A549 (cell line): ENCODE measurements at regions of chr1 and their contacts with region 1.

Region 1: GRCh38 chr1:32321712-32322291 is 14.2 kb downstream of the MARCKSL1 start:
- DNase-seq: peak; percentile 42 to 88
- ATAC-seq: peak; percentile 97 to 98
- H3K4me3 ChIP-seq: 0 out of 3 replicates have a peak overlapping the region, but pooled peaks have one; percentile 9
- H3K27ac ChIP-seq: peak overlapping the region; percentile 87 to 90
- H3K4me1 ChIP-seq: peaks cover 31% of the 10 kb centered on the region
- CTCF ChIP-seq: no peak
- EP300 ChIP-seq: no peak; a peak in 1 of 5 replicates
- POLR2A ChIP-seq: no peak
- RAD21 ChIP-seq: no peak

Region 2: GRCh38 chr1:32142446-32143301 is 179.1 kb before region 1 on chr1:
- CTCF ChIA-PET with region 1: no interaction called
- POLR2A ChIA-PET with region 1: no interaction called
- DNase-seq: peak; percentile 75 to 78
- ATAC-seq: peak; percentile 91 to 96
- H3K4me3 ChIP-seq: no peak overlapping the region
- H3K27ac ChIP-seq: peak overlapping the region in 1 of 2 experiments; percentile 45; a peak in 1 of 6 replicates
- H3K4me1 ChIP-seq: peaks cover 34% of the 10 kb centered on the region
- CTCF ChIP-seq: no peak
- EP300 ChIP-seq: no peak
- POLR2A ChIP-seq: no peak
- RAD21 ChIP-seq: no peak

Region 3: GRCh38 chr1:32215629-32216480 is 105.9 kb before region 1 on chr1:
- CTCF ChIA-PET with region 1: interaction called, 30 read pairs
- POLR2A ChIA-PET with region 1: interaction called, 5 read pairs
- DNase-seq: peak; percentile 61 to 62
- ATAC-seq: peak; percentile 94 to 96
- H3K4me3 ChIP-seq: no peak overlapping the region
- H3K27ac ChIP-seq: no peak overlapping the region
- H3K4me1 ChIP-seq: peaks cover 3% of the 10 kb centered on the region; the same call in 2 of the 3 replicates
- CTCF ChIP-seq: peak; percentile 64
- EP300 ChIP-seq: no peak
- POLR2A ChIP-seq: no peak
- RAD21 ChIP-seq: peak; percentile 65 to 75

Region 4: GRCh38 chr1:32240140-32240951 is 81.5 kb before region 1 on chr1:
- CTCF ChIA-PET with region 1: interaction called, 28 read pairs
- POLR2A ChIA-PET with region 1: no interaction called
- DNase-seq: peak; percentile 53 to 75
- ATAC-seq: peak; percentile 76 to 85
- H3K4me3 ChIP-seq: peak overlapping the region; percentile 56
- H3K27ac ChIP-seq: peak overlapping the region; percentile 79 to 94
- H3K4me1 ChIP-seq: peaks cover 41% of the 10 kb centered on the region
- CTCF ChIP-seq: peak; percentile 36
- EP300 ChIP-seq: no peak
- POLR2A ChIP-seq: peak; percentile 71
- RAD21 ChIP-seq: peak; percentile 6 to 37; a peak in 2 of 5 replicates

Region 5: DNA sequence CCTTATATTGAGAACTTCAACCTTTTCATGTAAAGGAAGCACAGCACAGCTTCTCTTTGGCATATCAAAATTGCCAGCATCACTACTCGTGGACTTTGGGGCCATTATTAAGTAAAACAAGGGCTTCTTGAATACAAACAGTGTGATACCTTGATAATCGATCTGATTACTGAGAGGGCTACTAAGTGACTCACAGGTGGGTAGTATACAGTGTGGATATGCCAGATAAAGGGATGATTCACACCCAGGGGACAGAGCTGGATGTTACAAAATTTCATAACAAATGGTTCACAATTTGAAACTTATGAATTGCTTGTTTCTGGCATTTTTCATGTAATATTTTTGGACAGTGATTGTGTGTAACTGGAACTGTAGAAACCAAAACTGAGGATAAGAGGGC is 14.5 kb before region 1 on chr1:
- CTCF ChIA-PET with region 1: interaction called, 15 read pairs
- POLR2A ChIA-PET with region 1: interaction called, 7 read pairs
- DNase-seq: no peak
- ATAC-seq: no peak
- H3K4me3 ChIP-seq: no peak overlapping the region
- H3K27ac ChIP-seq: no peak overlapping the region
- H3K4me1 ChIP-seq: peaks cover 27% of the 10 kb centered on the region; the same call in 2 of the 3 replicates
- CTCF ChIP-seq: no peak
- EP300 ChIP-seq: no peak
- POLR2A ChIP-seq: no peak
- RAD21 ChIP-seq: no peak